ENCODE measurements at regions of chr17 and their contacts with region 1.

Region 1: GRCh38 chr17:36722121-36722902 is 120.9 kb downstream of the MRM1 start:
- DNase-seq: peak; percentile 57 to 88 (median 78)
- ATAC-seq: peak; percentile 96 to 97
- H3K4me3 Mint-ChIP-seq: peak overlapping the region; percentile 80 to 91 (median 86)
- H3K27ac Mint-ChIP-seq: peak overlapping the region; percentile 96 to 99 (median 98)
- H3K4me1 Mint-ChIP-seq: peaks cover 39 to 72% (median 63%) of the 10 kb centered on the region in 4 donors
- H3K27me3 Mint-ChIP-seq: peaks cover 0 to 2% (median 1%) of the 10 kb centered on the region in 5 donors

Region 2: DNA sequence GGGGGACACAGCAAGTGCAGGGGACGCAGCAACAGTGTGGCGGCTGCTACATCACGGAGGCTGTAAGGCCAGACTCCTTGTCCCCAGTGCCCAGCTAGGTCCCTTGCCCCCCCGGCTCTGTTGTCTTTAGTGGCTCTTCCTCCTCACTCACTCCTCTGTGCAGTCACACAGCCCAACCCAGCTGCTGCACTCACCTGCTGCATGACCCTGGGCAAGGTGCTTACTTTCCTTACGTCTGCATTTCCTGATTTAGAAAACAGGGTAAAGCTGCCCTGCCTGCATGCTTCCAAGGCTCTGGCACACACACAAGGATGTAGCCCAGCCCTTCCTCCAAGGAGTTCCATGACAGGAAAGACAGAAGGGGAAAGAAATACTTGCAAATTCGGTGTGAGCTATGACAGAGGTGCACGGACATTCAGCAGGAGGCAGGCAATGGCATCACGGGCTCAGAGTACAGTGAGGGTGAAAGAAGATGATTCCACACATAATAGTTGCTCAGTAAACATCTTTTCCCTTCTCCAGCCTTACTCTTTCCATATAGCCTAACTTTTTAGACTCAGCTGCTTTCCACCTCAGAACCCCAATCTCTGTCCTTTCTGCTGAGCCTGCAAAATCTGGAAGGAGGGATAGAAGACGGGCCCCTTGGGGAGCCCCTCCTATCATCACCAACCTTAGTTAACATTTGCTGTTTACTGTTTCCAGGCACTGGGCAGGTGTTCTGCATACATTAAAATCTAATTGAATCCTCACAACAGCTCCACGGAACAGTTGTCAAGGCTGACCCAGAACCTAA is 30.0 kb after region 1 on chr17:
- POLR2A ChIA-PET with region 1: interaction called, 13 read pairs
- DNase-seq: no peak
- ATAC-seq: no peak
- H3K4me3 Mint-ChIP-seq: no peak overlapping the region
- H3K27ac Mint-ChIP-seq: no peak overlapping the region
- H3K4me1 Mint-ChIP-seq: peaks cover 0 to 6% (median under 1%) of the 10 kb centered on the region in 4 donors
- H3K27me3 Mint-ChIP-seq: peaks cover 0 to 7% (median 3%) of the 10 kb centered on the region in 5 donors